Activated naive CD4-positive, alpha-beta T cell treated with anti-CD3 and anti-CD28 coated beads for 36 hours (primary cell): ENCODE measurements at regions of chr12 and their contacts with region 1.

Region 1: GRCh38 chr12:24795699-24796385 is 153.1 kb downstream of the BCAT1 start:
- DNase-seq: no peak
- H3K4me3 Mint-ChIP-seq: peak overlapping the region; percentile 54
- H3K27ac Mint-ChIP-seq: no peak overlapping the region
- H3K4me1 Mint-ChIP-seq: peaks cover 28% of the 10 kb centered on the region
- H3K27me3 Mint-ChIP-seq: no peaks in the 10 kb centered on the region

Region 2: GRCh38 chr12:24778486-24779304 is 17.1 kb before region 1 on chr12:
- CTCF ChIA-PET with region 1: no interaction called
- intact Hi-C with region 1: no loop called
- DNase-seq: no peak
- H3K4me3 Mint-ChIP-seq: no peak overlapping the region
- H3K27ac Mint-ChIP-seq: no peak overlapping the region
- H3K4me1 Mint-ChIP-seq: no peaks in the 10 kb centered on the region
- H3K27me3 Mint-ChIP-seq: peaks cover 13% of the 10 kb centered on the region

Region 3: DNA sequence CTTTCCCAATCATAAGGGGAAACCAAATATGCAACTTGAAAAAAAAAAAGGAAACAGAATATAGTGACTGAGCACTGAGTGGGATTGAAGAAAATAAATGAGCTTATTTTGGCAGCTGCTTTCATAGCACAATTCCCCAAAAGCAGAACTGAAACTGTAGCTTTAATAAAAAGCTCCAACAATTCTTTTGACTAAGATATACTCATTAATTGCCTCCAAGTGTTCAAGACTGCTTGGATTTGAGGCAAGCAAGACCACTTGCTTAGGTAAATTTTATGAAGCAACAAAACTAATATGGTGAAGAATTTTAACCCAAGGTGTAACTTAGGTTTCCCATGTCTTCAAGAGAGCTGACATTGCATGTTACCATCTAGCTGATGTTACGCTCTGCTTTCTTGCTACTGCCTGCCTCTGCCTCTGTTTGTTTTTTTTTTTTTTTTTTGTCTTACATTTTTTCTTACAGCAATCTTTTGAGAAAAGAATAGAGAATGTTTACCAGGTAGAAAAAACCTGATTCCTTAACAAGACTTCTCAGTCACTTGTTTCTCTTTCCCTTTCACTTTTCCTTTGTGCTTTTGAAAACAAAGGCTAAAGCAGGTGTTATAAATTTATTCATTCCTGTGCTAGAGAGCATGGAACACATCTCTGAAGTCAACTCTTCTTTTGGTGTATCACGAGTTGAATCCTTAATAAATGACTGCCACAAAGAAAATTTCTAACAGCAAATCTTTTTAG is 18.7 kb after region 1 on chr12:
- CTCF ChIA-PET with region 1: no interaction called
- intact Hi-C with region 1: loop called (anchors 2 kb)
- DNase-seq: no peak
- H3K4me3 Mint-ChIP-seq: peak overlapping the region; percentile 52
- H3K27ac Mint-ChIP-seq: peak overlapping the region; percentile 32
- H3K4me1 Mint-ChIP-seq: peaks cover 22% of the 10 kb centered on the region
- H3K27me3 Mint-ChIP-seq: no peaks in the 10 kb centered on the region